Posterior vena cava (tissue), 2 donors: ENCODE measurements at regions of chr7 and their contacts with region 1.

Region 1: GRCh38 chr7:74061840-74062539 is 21.6 kb upstream of the LIMK1 start:
- DNase-seq: peak; percentile 95

Region 2: DNA sequence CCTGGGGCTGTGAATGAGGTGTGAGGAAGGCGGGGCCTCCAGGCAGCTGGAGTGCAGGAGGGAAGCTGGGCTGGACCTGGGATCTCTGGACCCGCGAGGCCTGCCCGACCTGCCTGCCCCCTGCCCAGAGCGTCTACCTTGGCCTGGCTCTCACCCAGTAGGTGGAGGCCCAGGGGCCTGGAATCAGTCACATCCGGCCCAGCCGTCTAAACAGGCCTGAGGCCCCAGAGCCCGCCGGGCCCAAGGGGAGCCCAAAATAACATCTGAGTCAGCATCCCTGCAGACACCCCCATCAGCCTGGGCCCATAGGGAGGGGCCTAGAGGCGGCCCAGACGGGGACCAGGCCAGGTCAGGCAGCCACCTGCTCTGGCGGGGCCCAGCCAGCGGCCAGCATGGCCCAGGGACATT is 49.1 kb before region 1 on chr7:
- intact Hi-C with region 1: loop called in 1 of 2 experiments (anchors 1 kb)
- DNase-seq: no peak

Region 3: DNA sequence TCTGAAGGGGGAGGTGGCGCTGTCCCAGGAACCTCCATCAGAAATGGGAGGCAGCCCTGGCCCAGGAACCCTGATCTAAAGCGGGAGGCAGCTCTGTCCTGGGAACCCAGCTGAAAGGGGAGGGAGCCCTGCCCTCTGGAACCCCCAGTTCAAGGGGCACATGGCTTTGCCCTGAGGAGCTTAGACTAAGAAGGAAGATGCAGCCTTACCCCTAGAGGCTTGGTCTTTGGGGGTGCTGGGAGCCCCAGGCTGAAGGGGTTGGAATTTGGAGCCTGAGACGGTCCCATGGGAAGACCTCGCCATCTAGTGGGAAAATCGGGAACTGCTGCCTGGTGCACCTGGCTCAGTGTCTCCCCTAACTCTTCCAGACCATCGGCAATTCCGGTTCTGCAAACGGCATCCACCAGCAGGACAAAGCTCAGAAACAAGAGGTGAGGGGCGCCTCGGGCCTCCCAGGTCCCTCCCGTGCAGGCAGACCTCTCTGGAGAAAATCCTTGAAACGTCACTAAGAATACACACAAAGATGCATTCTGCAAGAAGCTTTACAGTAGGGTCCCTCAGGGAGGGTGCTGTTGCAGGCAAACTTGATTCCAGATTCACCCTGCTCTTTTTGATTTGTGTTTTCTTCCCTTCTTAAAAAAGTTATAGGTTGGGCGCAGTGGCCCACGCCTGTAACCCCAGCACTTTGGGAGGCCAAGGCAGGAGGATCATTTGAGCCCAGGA is 339.3 kb after region 1 on chr7:
- intact Hi-C with region 1: loop called in 1 of 2 experiments (anchors 10 kb)
- DNase-seq: peak; percentile 84